Right lobe of liver (tissue), 6 donors: ENCODE measurements at regions of chr13 and their contacts with region 1.

Region 1: GRCh38 chr13:30241532-30241931 is 65.8 kb downstream of the KATNAL1 start:
- DNase-seq: no peak
- ATAC-seq: no peak
- H3K4me3 ChIP-seq: no peak overlapping the region
- H3K27ac ChIP-seq: no peak overlapping the region
- H3K4me1 ChIP-seq: no peaks in the 10 kb centered on the region
- H3K27me3 ChIP-seq: no peaks in the 10 kb centered on the region
- CTCF ChIP-seq: no peak
- POLR2A ChIP-seq: no peak

Region 2: DNA sequence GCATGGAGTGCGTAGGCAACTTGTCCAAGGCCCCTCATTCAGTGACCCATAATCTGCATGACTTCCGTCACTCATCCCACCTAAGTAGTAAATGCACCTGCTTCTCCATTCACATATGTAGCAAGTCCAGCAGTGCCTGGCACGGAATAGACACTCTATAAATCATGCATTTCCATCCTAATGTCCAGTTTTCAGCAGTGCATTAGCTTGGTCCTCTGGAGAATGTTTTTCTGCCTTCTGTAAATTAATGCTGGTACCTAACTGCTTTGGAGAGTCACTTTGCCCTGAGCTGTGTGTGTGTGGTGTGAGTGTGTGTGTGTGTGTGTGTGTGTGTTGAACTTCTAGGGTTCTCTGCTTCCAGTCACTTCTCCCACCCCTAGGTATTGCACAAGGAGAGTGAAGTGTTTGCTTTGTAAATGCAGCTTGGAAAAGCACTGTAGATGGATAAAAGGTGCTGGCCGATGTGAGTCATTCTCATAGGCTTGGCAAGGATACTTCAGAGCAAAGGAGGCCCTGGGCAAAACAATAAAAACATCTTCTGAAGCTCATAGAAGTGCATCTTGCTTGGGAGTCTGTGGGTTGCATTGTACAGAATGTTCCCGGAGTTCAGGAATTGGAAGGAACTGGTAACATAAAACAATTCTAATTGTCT is 116.0 kb before region 1 on chr13:
- intact Hi-C with region 1: loop called in 1 of 2 experiments (anchors 5 kb)
- DNase-seq: no peak
- ATAC-seq: peak; percentile 55 to 94 (median 89)
- H3K4me3 ChIP-seq: no peak overlapping the region
- H3K27ac ChIP-seq: no peak overlapping the region
- H3K4me1 ChIP-seq: no peaks in the 10 kb centered on the region
- H3K27me3 ChIP-seq: no peaks in the 10 kb centered on the region
- CTCF ChIP-seq: no peak
- POLR2A ChIP-seq: no peak

Region 3: GRCh38 chr13:30158774-30159445 is 82.6 kb before region 1 on chr13:
- intact Hi-C with region 1: no loop called
- DNase-seq: no peak
- ATAC-seq: no peak
- H3K4me3 ChIP-seq: no peak overlapping the region
- H3K27ac ChIP-seq: no peak overlapping the region
- H3K4me1 ChIP-seq: no peaks in the 10 kb centered on the region
- H3K27me3 ChIP-seq: no peaks in the 10 kb centered on the region
- CTCF ChIP-seq: peak in 1 of 4 donors; percentile 14
- POLR2A ChIP-seq: no peak